ENCODE measurements at regions of chr12 and their contacts with region 1.

Region 1: DNA sequence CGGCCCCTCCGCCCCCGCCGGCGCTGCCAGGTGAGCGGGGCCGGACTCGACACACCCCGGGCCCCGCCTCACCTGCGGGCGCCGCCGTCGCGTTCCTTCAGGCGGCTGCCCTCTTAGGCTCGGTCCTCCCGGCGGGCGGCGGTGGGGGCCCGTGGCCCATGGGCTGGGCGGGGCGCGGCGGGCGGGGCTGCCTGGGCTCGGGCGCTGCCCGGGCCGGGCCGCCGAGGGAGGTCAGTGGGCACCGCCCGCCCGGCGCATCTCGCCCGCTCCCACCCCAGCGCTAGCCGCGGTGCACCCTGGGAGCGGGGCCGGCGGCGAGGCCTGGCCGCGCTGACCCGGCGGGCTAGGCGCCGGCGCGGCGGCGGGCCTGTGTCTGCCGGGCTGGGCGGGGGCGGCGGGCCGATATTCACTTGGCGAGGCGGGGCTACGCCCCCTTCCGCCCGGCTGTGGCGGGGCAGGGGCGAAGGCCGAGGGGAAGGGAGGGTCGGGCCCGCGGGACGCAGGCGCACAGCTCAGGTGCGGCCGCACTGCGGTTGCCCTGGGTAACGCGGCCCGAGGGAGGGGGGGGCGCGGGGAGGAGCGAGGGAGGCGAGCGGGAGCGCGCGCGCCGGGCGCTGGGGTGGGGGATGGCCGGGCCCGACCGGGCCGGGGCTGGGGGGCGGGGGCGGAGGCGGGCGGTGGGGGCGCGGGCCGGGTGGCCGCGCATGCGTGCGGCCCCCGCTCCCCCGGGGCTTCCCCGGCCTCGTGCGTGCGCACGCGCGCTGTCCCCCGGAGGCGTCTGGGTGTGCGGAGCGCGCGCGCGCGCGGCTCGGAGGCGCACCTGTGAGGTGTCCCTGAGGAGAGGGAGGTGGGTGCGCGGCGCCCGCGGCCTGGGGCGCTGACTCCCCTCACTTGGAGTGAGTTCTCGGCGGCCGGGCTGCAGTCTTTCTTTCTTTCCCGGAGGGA is at the starts of genes CCDC92 and ZNF664:
- DNase-seq: peak; percentile 87 to 97 (median 92)
- ATAC-seq: peak; percentile 90
- H3K4me3 ChIP-seq: peak within 1 kb of the TSS; percentile 58
- H3K4me3 Mint-ChIP-seq: peak within 1 kb of the TSS; percentile 90 to 99 (median 96)
- H3K27ac ChIP-seq: peak within 1 kb of the TSS; percentile 69
- H3K27ac Mint-ChIP-seq: peak within 1 kb of the TSS; percentile 87 to 98 (median 91)
- H3K4me1 ChIP-seq: peaks cover 0 to 9% of the 10 kb centered on the region in 2 donors
- H3K4me1 Mint-ChIP-seq: peaks cover 13 to 50% (median 45%) of the 10 kb centered on the region in 7 donors
- H3K27me3 ChIP-seq: no peaks in the 10 kb centered on the region
- H3K27me3 Mint-ChIP-seq: peaks cover 0 to 11% (median 0%) of the 10 kb centered on the region in 5 donors
- total RNA-seq, gene CCDC92: 17.3 to 24.9 (median 23.0) TPM
- total RNA-seq, gene ZNF664: 25.0 to 57.5 (median 45.8) TPM

Region 2: GRCh38 chr12:123633379-123634141 is 339.2 kb before region 1 on chr12 and contains the starts of genes EIF2B1 and GTF2H3:
- CTCF ChIA-PET with region 1: no interaction called
- POLR2A ChIA-PET with region 1: no interaction called
- intact Hi-C with region 1: loop called (anchors 2 to 5 kb)
- DNase-seq: peak; percentile 83 to 96 (median 94)
- ATAC-seq: peak; percentile 98
- H3K4me3 ChIP-seq: peak within 1 kb of the TSS; percentile 85
- H3K4me3 Mint-ChIP-seq: peak within 1 kb of the TSS; percentile 89 to 100 (median 96)
- H3K27ac ChIP-seq: peak within 1 kb of the TSS; percentile 91
- H3K27ac Mint-ChIP-seq: peak within 1 kb of the TSS; percentile 91 to 99 (median 96)
- H3K4me1 ChIP-seq: peaks cover 11 to 16% of the 10 kb centered on the region in 2 donors
- H3K4me1 Mint-ChIP-seq: peaks cover 21 to 54% (median 43%) of the 10 kb centered on the region in 7 donors
- H3K27me3 ChIP-seq: no peaks in the 10 kb centered on the region
- H3K27me3 Mint-ChIP-seq: no peaks in the 10 kb centered on the region
- total RNA-seq, gene EIF2B1: 44.0 to 64.3 (median 49.5) TPM
- total RNA-seq, gene GTF2H3: 21.4 to 39.7 (median 27.7) TPM

Region 3: DNA sequence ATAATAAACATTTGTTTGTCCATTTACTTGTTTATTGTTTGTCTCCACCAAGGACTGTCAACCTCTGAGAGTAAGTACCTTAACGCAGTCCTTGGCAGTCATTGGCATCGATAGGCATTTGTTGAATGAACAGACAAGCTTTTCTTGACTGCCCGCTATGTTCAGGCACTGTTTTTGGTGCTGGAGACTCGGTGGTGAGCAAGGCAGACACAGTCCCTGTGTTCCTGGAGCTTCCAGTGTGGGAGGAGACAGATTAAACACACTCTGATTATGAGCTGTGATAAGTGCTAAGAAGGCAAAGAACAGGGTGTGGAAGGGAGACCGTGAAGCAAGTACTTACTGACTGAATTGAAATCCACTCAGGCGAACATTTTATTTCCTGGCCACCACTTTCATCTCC is 259.3 kb before region 1 on chr12:
- CTCF ChIA-PET with region 1: no interaction called
- POLR2A ChIA-PET with region 1: no interaction called
- intact Hi-C with region 1: loop called (anchors 1 to 2 kb)
- DNase-seq: peak in 2 of 9 donors; percentile 7 to 41
- ATAC-seq: no peak
- H3K4me3 ChIP-seq: peak overlapping the region; percentile 95
- H3K4me3 Mint-ChIP-seq: peak overlapping the region; percentile 81 to 100 (median 90)
- H3K27ac ChIP-seq: peak overlapping the region; percentile 77
- H3K27ac Mint-ChIP-seq: peak overlapping the region; percentile 37 to 93 (median 79)
- H3K4me1 ChIP-seq: peaks cover 11 to 21% of the 10 kb centered on the region in 2 donors
- H3K4me1 Mint-ChIP-seq: peaks cover 28 to 42% (median 38%) of the 10 kb centered on the region in 7 donors
- H3K27me3 ChIP-seq: no peaks in the 10 kb centered on the region
- H3K27me3 Mint-ChIP-seq: no peaks in the 10 kb centered on the region

Region 4: GRCh38 chr12:123931686-123932321 is 40.9 kb before region 1 on chr12:
- CTCF ChIA-PET with region 1: interaction called, 3 read pairs
- POLR2A ChIA-PET with region 1: interaction called, 3 read pairs
- intact Hi-C with region 1: loop called in 1 of 2 experiments (anchors 1 kb)
- DNase-seq: peak in 7 of 9 donors; percentile 60 to 80 (median 77)
- ATAC-seq: peak; percentile 85
- H3K4me3 ChIP-seq: peak overlapping the region; percentile 31
- H3K4me3 Mint-ChIP-seq: peak overlapping the region; percentile 32 to 83 (median 72)
- H3K27ac ChIP-seq: no peak overlapping the region
- H3K27ac Mint-ChIP-seq: peak overlapping the region in 7 of 9 donors; percentile 27 to 87 (median 73)
- H3K4me1 ChIP-seq: peaks cover 0 to 17% of the 10 kb centered on the region in 2 donors
- H3K4me1 Mint-ChIP-seq: peaks cover 16 to 40% (median 22%) of the 10 kb centered on the region in 7 donors
- H3K27me3 ChIP-seq: no peaks in the 10 kb centered on the region
- H3K27me3 Mint-ChIP-seq: peaks cover 0 to 11% (median 0%) of the 10 kb centered on the region in 5 donors

Region 5: DNA sequence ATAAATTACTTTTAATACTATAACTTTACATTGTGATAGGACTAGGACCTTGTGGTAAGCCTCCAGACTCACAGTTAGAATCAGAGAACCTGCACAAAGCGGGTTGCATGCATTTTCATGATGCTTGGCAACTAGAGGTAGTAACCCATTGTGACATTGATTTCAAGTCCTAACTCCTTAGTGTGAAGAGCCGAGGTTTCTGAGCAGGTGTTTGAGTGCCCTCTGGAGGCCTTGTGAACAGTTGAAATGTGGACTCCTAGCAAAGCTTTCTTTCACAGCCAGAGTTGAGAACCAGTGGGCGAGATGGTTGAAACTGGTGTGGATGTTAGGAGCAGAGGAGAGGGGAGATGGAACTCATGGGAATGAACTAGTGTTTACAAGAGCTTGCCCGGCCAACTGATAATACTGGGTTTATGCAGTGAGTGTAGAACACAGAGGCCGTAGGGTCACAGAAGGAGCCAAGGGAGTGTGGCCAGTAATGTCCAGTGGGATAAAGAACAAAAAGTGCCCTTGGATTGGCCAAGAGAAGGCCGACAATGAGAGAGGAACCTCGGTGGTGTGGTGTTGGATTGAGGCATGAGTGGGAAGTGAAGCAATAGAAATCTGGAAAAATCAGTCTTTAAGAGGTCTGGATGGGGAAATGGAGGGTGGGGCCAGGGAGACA is 11.2 kb after region 1 on chr12:
- CTCF ChIA-PET with region 1: interaction called, 4 read pairs
- POLR2A ChIA-PET with region 1: interaction called, 3 read pairs
- intact Hi-C with region 1: loop called in 1 of 2 experiments (anchors 1 kb)
- DNase-seq: peak; percentile 15 to 71 (median 53)
- ATAC-seq: peak; percentile 92
- H3K4me3 ChIP-seq: no peak overlapping the region
- H3K4me3 Mint-ChIP-seq: no peak overlapping the region
- H3K27ac ChIP-seq: no peak overlapping the region
- H3K27ac Mint-ChIP-seq: peak overlapping the region in 1 of 9 donors; percentile 1
- H3K4me1 ChIP-seq: no peaks in the 10 kb centered on the region
- H3K4me1 Mint-ChIP-seq: peaks cover 9 to 33% (median 26%) of the 10 kb centered on the region in 7 donors
- H3K27me3 ChIP-seq: no peaks in the 10 kb centered on the region
- H3K27me3 Mint-ChIP-seq: no peaks in the 10 kb centered on the region

Region 6: GRCh38 chr12:124927201-124928094 is 954.7 kb after region 1 on chr12:
- CTCF ChIA-PET with region 1: no interaction called
- POLR2A ChIA-PET with region 1: no interaction called
- intact Hi-C with region 1: loop called in 1 of 2 experiments (anchors 5 kb)
- DNase-seq: peak; percentile 86 to 95 (median 92)
- ATAC-seq: peak; percentile 93
- H3K4me3 ChIP-seq: peak overlapping the region; percentile 91
- H3K4me3 Mint-ChIP-seq: peak overlapping the region; percentile 84 to 97 (median 93)
- H3K27ac ChIP-seq: peak overlapping the region; percentile 65
- H3K27ac Mint-ChIP-seq: peak overlapping the region; percentile 90 to 100 (median 98)
- H3K4me1 ChIP-seq: peaks cover 15 to 18% of the 10 kb centered on the region in 2 donors
- H3K4me1 Mint-ChIP-seq: peaks cover 18 to 37% (median 32%) of the 10 kb centered on the region in 7 donors
- H3K27me3 ChIP-seq: no peaks in the 10 kb centered on the region
- H3K27me3 Mint-ChIP-seq: peaks cover 0 to 9% (median 0%) of the 10 kb centered on the region in 5 donors

Measured in naive thymus-derived CD4-positive, alpha-beta T cell (primary cell).